B cell (primary cell): ENCODE measurements at regions of chr10 and their contacts with region 1.

Region 1: GRCh38 chr10:96334616-96335526 is 23.9 kb downstream of the OPALIN start:
- DNase-seq: peak; percentile 32
- ATAC-seq: no peak
- H3K4me3 ChIP-seq: no peak overlapping the region
- H3K4me3 Mint-ChIP-seq: no peak overlapping the region
- H3K27ac ChIP-seq: no peak overlapping the region
- H3K27ac Mint-ChIP-seq: no peak overlapping the region
- H3K4me1 ChIP-seq: peaks cover 0 to 3% of the 10 kb centered on the region in 2 donors
- H3K4me1 Mint-ChIP-seq: peaks cover 7% of the 10 kb centered on the region
- H3K27me3 ChIP-seq: no peaks in the 10 kb centered on the region
- H3K27me3 Mint-ChIP-seq: peaks cover 15% of the 10 kb centered on the region
- CTCF ChIP-seq: peak; percentile 44

Region 2: DNA sequence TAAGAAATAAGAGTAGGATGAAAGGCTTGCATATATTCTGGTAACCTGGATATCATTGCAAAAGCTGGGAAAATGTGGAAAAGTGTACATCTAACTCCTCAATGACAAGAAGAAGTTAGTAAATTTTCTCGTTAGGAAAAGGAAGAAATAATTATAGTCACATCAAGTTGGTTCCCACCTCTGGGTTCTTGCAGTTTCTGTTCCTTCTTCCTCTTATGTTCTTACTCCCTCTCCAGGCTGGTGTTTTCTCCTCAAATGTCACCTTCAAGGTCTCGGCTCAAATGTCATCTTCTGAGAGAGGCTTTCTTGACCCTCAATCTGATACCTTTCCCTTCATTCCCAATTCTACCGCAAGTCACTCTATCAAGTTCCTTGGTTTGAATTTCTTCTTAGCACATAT is 514.5 kb before region 1 on chr10:
- CTCF ChIA-PET with region 1: no interaction called
- POLR2A ChIA-PET with region 1: no interaction called
- intact Hi-C with region 1: no loop called
- DNase-seq: peak; percentile 71
- ATAC-seq: peak; percentile 75
- H3K4me3 ChIP-seq: peak overlapping the region in 1 of 5 experiments; percentile 21
- H3K4me3 Mint-ChIP-seq: peak overlapping the region; percentile 75
- H3K27ac ChIP-seq: peak overlapping the region; percentile 59 to 74
- H3K27ac Mint-ChIP-seq: peak overlapping the region; percentile 89
- H3K4me1 ChIP-seq: peaks cover 29 to 43% of the 10 kb centered on the region in 2 donors
- H3K4me1 Mint-ChIP-seq: peaks cover 72% of the 10 kb centered on the region
- H3K27me3 ChIP-seq: no peaks in the 10 kb centered on the region
- H3K27me3 Mint-ChIP-seq: no peaks in the 10 kb centered on the region
- CTCF ChIP-seq: no peak

Region 3: GRCh38 chr10:95832216-95833041 is 502.4 kb before region 1 on chr10:
- CTCF ChIA-PET with region 1: no interaction called
- POLR2A ChIA-PET with region 1: no interaction called
- intact Hi-C with region 1: no loop called
- DNase-seq: peak; percentile 94
- ATAC-seq: peak; percentile 89
- H3K4me3 ChIP-seq: peak overlapping the region in 3 of 5 experiments; percentile 11 to 36 (median 23)
- H3K4me3 Mint-ChIP-seq: peak overlapping the region; percentile 83
- H3K27ac ChIP-seq: peak overlapping the region; percentile 89 to 95
- H3K27ac Mint-ChIP-seq: peak overlapping the region; percentile 96
- H3K4me1 ChIP-seq: peaks cover 82 to 87% of the 10 kb centered on the region in 2 donors
- H3K4me1 Mint-ChIP-seq: peaks cover 82% of the 10 kb centered on the region
- H3K27me3 ChIP-seq: no peaks in the 10 kb centered on the region
- H3K27me3 Mint-ChIP-seq: no peaks in the 10 kb centered on the region
- CTCF ChIP-seq: no peak

Region 4: GRCh38 chr10:96319754-96320474 is 15.0 kb before region 1 on chr10:
- CTCF ChIA-PET with region 1: interaction called, 17 read pairs
- POLR2A ChIA-PET with region 1: no interaction called
- intact Hi-C with region 1: no loop called
- DNase-seq: no peak
- ATAC-seq: no peak
- H3K4me3 ChIP-seq: no peak overlapping the region
- H3K4me3 Mint-ChIP-seq: no peak overlapping the region
- H3K27ac ChIP-seq: no peak overlapping the region
- H3K27ac Mint-ChIP-seq: no peak overlapping the region
- H3K4me1 ChIP-seq: no peaks in the 10 kb centered on the region
- H3K4me1 Mint-ChIP-seq: no peaks in the 10 kb centered on the region
- H3K27me3 ChIP-seq: peaks cover 0 to 5% (median 0%) of the 10 kb centered on the region in 4 experiments
- H3K27me3 Mint-ChIP-seq: peaks cover 27% of the 10 kb centered on the region
- CTCF ChIP-seq: no peak

Region 5: DNA sequence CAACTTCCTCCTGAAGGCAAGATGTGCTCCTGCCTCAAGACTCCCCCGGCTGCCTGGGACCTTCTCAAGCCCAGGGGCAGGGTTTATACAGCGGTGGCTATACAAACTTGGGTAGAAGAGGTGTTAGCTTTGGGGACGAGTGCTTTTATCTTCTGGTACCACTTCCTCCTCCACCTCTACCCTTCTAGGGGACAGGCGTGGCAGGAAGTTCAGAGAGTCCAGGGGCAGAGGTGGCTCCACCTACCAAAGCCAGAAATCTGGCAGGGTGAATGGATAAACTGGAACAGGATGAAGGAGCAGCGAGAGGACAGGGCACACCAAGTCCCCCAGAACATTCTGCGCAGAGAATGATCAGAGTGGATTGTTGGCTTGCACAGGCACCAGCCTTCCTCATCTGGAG is 275.9 kb after region 1 on chr10:
- CTCF ChIA-PET with region 1: no interaction called
- POLR2A ChIA-PET with region 1: no interaction called
- intact Hi-C with region 1: no loop called
- DNase-seq: no peak
- ATAC-seq: no peak
- H3K4me3 ChIP-seq: no peak overlapping the region
- H3K4me3 Mint-ChIP-seq: no peak overlapping the region
- H3K27ac ChIP-seq: peak overlapping the region in 1 of 2 donors; percentile 36
- H3K27ac Mint-ChIP-seq: peak overlapping the region; percentile 50
- H3K4me1 ChIP-seq: no peaks in the 10 kb centered on the region
- H3K4me1 Mint-ChIP-seq: no peaks in the 10 kb centered on the region
- H3K27me3 ChIP-seq: no peaks in the 10 kb centered on the region
- H3K27me3 Mint-ChIP-seq: no peaks in the 10 kb centered on the region
- CTCF ChIP-seq: no peak